Right cardiac atrium (tissue), 5 donors: ENCODE measurements at regions of chr5 and their contacts with region 1.

Region 1: DNA sequence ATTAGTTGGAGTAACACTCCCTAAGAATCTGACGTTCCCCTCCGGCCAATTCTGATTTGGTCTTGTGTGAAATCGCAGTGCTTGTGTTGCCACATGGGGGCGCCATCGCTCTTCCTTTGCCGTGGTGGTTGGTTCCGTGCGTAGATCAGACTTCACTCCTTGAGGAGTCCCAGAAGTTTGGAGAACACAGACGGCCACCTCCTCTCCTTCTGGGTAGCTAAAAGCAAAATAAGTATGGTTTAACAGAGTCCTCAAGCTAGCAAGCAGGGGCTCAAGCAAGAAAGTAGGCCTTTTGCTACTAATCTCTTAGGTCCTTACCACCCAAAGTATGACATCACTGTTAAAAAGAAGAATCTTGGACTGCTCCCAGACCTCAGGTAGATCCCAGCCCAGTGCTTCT is 59.5 kb downstream of the HSPA4 start:
- DNase-seq: peak; percentile 87 to 94 (median 92)
- ATAC-seq: peak; percentile 78
- H3K4me3 ChIP-seq: no peak overlapping the region
- H3K27ac ChIP-seq: no peak overlapping the region
- H3K4me1 ChIP-seq: no peaks in the 10 kb centered on the region
- H3K27me3 ChIP-seq: no peaks in the 10 kb centered on the region

Region 2: DNA sequence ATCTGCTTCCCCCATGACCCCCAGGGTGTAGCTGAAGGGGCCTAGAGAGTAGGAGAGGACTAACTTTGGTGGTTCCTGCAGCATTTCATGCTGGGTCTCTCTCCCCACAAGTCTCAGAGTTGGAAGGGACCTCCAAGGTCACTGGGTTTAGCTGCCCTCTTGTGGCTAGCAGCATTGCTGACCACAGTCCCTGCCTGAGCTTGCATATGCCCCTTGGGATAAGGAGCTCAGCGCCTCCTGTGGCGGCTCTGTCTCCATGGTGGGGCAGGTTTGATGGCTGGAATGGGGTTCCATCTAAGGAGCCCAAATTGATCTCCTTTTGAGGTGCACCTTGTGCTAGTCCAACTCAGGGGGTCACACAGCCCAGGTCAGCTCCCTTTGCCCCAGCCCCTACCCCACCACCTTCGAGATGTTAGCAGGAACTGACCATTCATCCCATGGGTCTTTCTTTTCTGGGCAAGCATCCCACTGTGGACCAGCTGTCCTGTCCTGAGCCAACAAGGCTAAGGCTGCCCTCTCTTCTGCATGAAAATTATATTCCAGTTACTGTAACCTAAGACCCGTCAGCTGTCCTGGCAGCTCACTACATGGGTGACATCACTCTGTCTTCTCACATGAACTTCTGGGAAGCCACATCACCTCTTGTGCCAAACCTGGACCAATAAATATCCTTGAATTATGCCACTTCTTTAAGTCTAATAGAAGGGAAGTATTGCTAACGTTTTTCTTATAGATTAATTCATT is 136.8 kb after region 1 on chr5:
- intact Hi-C with region 1: loop called in 3 of 4 experiments (anchors 5 to 10 kb)
- DNase-seq: peak in 1 of 3 donors; percentile 47
- ATAC-seq: peak; percentile 18 to 73
- H3K4me3 ChIP-seq: no peak overlapping the region
- H3K27ac ChIP-seq: no peak overlapping the region
- H3K4me1 ChIP-seq: no peaks in the 10 kb centered on the region
- H3K27me3 ChIP-seq: no peaks in the 10 kb centered on the region

Region 3: DNA sequence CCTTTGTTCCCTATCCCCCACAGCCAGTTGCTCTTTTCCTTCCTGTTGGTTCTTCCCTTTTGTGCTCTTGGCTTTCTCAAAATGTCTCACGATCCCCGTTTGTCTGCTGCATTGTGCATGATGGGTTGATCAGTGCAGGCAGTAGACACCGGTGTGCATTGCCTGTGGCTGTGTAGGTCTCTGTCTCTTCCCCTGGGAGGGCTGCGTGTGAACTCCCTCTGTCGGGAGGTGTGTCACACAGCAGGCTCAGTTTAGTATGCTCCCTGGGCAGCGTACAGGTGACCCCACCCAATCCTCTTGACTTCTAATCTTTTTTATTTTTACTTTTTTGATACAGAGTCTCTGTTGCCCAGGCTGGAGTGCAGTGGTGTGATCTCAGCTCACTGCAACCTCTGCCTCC is 235.7 kb after region 1 on chr5:
- intact Hi-C with region 1: no loop called
- DNase-seq: no peak
- ATAC-seq: no peak
- H3K4me3 ChIP-seq: no peak overlapping the region
- H3K27ac ChIP-seq: no peak overlapping the region
- H3K4me1 ChIP-seq: no peaks in the 10 kb centered on the region
- H3K27me3 ChIP-seq: no peaks in the 10 kb centered on the region

Region 4: GRCh38 chr5:133868946-133869518 is 757.7 kb after region 1 on chr5:
- intact Hi-C with region 1: loop called in 1 of 4 experiments (anchors 10 kb)
- DNase-seq: peak; percentile 80 to 92 (median 86)
- ATAC-seq: peak; percentile 71 to 81
- H3K4me3 ChIP-seq: peak overlapping the region; percentile 21
- H3K27ac ChIP-seq: no peak overlapping the region
- H3K4me1 ChIP-seq: no peaks in the 10 kb centered on the region
- H3K27me3 ChIP-seq: no peaks in the 10 kb centered on the region